CD4-positive, alpha-beta memory T cell (primary cell): ENCODE measurements at regions of chr6 and their contacts with region 1.

Region 1: DNA sequence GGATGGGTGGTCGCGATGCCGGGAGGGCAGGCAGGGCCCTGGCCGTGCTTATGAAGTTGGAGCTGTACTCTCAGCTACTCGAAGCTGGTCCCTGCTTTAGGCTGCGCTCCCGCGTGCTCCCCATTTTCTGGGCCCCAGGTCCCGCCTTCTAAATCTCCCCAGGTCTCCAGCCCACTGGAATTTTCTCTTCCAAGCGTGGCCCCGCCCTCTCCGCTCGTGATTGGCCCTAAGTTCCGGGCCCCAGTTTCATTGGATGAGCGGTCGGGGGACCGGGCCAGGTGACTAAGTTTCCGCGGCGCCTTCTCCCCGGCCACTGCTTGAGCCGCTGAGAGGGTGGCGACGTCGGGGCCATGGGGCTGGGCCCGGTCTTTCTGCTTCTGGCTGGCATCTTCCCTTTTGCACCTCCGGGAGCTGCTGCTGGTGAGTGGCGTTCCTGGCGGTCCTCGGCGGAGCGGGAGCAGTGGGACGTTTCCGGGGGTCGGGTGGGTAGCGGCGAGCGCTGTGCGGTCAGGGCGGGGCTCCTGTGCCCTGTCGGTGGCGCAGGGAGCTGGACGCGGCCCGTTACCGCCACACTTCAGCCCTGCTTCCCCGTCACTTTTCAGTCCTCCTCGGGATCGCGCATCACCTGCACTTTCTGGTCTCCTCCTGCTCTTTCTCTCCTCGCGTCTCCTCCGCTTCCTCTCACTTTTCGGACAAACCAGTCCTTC is at the start of gene MICA:
- DNase-seq: peak; percentile 50 to 79 (median 54)
- H3K4me3 ChIP-seq: peak within 1 kb of the TSS; percentile 36 to 69
- H3K4me3 Mint-ChIP-seq: peak within 1 kb of the TSS; percentile 86 to 98 (median 97)
- H3K27ac ChIP-seq: peak within 1 kb of the TSS; percentile 76
- H3K27ac Mint-ChIP-seq: peak within 1 kb of the TSS; percentile 75 to 97 (median 91)
- H3K4me1 ChIP-seq: peaks cover 78% of the 10 kb centered on the region
- H3K4me1 Mint-ChIP-seq: peaks cover 55 to 93% (median 70%) of the 10 kb centered on the region in 4 donors
- H3K27me3 ChIP-seq: no peaks in the 10 kb centered on the region
- H3K27me3 Mint-ChIP-seq: no peaks in the 10 kb centered on the region
- total RNA-seq, gene MICA: 18.5 to 21.2 TPM

Region 2: DNA sequence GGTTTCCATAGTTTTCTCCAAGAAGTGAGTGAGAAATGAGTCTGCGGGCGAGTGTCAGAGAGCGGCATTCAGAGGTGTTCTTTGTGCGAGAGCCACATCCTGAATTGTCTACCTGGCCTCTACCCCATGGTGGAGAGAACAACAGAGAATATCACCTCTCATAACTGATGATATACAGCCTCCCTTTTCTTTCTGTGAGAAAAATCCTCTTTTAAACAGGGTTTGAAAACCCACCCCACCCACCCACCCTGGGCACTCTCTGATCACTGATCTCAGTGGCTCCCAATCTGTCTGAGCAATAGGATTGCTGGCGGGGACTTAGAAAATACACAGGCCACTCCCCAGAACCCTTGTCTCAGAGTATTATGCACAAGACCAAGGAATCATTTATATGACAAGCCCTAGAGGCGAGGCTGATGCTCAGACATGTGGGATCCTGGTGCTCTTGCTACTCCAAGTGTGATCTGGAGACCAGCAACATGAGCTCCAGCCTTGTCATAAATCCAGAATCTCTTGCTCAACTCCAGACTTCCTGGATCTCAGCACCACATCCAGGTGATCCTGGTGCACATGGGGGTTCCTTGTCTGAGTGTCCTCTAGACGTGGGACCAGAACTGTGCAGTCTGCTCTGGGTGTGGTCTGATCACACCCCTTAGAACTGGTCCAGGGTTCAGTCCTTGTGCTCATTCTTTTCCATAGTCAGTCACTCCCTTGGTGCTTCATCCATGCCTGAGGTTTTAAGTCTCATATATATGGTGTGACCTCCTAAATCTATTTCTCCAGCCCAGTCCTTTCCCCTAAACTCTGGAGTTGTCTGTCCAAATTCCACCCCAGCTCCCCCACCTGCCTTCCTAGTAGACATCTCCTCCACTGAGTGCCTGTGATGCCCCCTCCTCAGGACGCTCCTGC is 51.8 kb before region 1 on chr6:
- CTCF ChIA-PET with region 1: no interaction called
- POLR2A ChIA-PET with region 1: interaction called, 18 read pairs
- intact Hi-C with region 1: no loop called
- DNase-seq: peak; percentile 48 to 71 (median 56)
- H3K4me3 ChIP-seq: no peak overlapping the region
- H3K4me3 Mint-ChIP-seq: peak overlapping the region; percentile 62 to 99 (median 98)
- H3K27ac ChIP-seq: peak overlapping the region; percentile 4
- H3K27ac Mint-ChIP-seq: peak overlapping the region; percentile 85 to 100 (median 88)
- H3K4me1 ChIP-seq: peaks cover 54% of the 10 kb centered on the region
- H3K4me1 Mint-ChIP-seq: peaks cover 51 to 74% (median 63%) of the 10 kb centered on the region in 4 donors
- H3K27me3 ChIP-seq: no peaks in the 10 kb centered on the region
- H3K27me3 Mint-ChIP-seq: no peaks in the 10 kb centered on the region

Region 3: DNA sequence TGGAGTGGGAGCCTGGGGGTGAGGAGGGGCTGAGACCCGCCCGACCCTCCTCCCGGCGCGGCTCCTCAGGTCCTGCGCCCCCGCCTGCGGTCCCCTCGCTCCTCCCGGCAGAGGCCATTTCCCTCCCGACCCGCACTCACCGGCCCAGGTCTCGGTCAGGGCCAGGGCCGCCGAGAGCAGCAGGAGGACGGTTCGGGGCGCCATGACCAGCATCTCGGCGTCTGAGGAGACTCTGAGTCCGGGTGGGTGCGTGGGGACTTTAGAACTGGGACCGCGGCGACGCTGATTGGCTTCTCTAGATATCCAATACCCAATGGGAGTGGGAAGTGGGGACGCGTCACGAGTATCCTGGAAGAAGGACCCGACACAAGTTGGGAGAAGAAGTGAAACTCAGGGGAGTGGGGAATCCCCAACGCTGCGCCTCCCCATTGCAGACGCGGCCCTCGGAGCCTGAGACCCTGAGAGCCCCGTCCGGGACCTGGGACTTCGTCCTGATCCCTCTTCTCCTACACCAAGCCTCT is 46.4 kb before region 1 on chr6 and contains the start of gene HLA-B:
- CTCF ChIA-PET with region 1: no interaction called
- POLR2A ChIA-PET with region 1: interaction called, 18 read pairs
- intact Hi-C with region 1: loop called (anchors 1 kb)
- DNase-seq: peak; percentile 82 to 93 (median 85)
- H3K4me3 ChIP-seq: peak within 1 kb of the TSS; percentile 68 to 86
- H3K4me3 Mint-ChIP-seq: peak within 1 kb of the TSS; percentile 97 to 99 (median 99)
- H3K27ac ChIP-seq: peak within 1 kb of the TSS; percentile 99
- H3K27ac Mint-ChIP-seq: peak within 1 kb of the TSS; percentile 100
- H3K4me1 ChIP-seq: peaks cover 59% of the 10 kb centered on the region
- H3K4me1 Mint-ChIP-seq: peaks cover 44 to 82% (median 55%) of the 10 kb centered on the region in 4 donors
- H3K27me3 ChIP-seq: no peaks in the 10 kb centered on the region
- H3K27me3 Mint-ChIP-seq: peaks cover 1% of the 10 kb centered on the region in 2 donors
- total RNA-seq, gene HLA-B: 5,565 to 5,762 TPM

Region 4: DNA sequence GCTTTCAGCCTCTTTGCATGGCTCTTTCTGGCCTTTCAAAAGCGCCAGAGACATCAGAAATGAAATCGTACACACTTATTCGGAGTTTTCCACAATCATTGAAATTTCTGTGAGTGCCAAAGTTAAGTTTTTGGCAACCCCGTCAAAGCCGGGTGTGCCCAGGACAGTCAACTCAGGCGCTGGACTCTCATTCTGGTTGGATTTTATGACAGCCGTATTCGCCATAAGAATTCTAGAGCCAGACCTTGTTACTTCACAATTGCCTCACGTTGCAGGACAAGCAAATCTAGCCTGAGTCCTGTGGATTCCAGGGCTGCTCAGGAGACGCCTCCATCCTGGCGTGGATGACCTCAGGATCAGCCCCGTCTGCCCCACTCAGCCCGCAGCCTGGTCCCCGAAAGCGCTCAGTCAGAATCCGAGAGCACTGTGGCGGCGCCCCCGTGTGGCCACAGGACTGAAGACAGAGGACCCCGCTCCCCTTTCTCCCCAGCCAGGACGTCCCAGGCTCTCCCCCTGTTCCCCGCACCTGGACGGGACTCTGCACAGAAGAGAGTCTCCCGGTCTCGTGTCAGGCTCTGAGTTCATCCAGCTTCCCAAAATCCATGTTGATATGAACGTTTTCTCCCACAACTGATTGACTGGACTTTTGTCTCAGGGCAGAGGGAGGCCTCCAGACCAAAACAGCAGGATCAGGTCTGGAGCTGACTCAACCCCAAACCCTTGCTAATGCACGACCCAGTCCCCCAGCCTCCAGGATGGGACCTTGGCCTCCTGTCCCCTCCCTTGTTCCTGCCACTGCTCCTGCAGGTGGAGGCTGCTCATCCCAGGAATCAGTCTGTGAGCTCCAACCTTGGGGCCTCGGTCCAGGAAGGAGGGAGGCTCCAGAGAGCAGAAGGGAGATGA is 38.2 kb after region 1 on chr6:
- CTCF ChIA-PET with region 1: interaction called, 131 read pairs
- POLR2A ChIA-PET with region 1: interaction called, 16 read pairs
- intact Hi-C with region 1: no loop called
- DNase-seq: peak; percentile 68 to 78 (median 75)
- H3K4me3 ChIP-seq: no peak overlapping the region
- H3K4me3 Mint-ChIP-seq: peak overlapping the region in 1 of 8 donors; percentile 33
- H3K27ac ChIP-seq: no peak overlapping the region
- H3K27ac Mint-ChIP-seq: peak overlapping the region in 2 of 7 donors; percentile 42 to 48
- H3K4me1 ChIP-seq: peaks cover 7% of the 10 kb centered on the region
- H3K4me1 Mint-ChIP-seq: peaks cover 0 to 8% (median under 1%) of the 10 kb centered on the region in 4 donors
- H3K27me3 ChIP-seq: peaks cover under 1% of the 10 kb centered on the region
- H3K27me3 Mint-ChIP-seq: peaks cover 25 to 27% of the 10 kb centered on the region in 2 donors

Region 5: GRCh38 chr6:31462964-31463870 is 59.8 kb after region 1 on chr6:
- CTCF ChIA-PET with region 1: interaction called, 3 read pairs
- POLR2A ChIA-PET with region 1: interaction called, 33 read pairs
- intact Hi-C with region 1: no loop called
- DNase-seq: peak; percentile 91 to 96 (median 94)
- H3K4me3 ChIP-seq: peak overlapping the region; percentile 82 to 85
- H3K4me3 Mint-ChIP-seq: peak overlapping the region; percentile 97 to 100 (median 100)
- H3K27ac ChIP-seq: peak overlapping the region; percentile 99
- H3K27ac Mint-ChIP-seq: peak overlapping the region; percentile 99 to 100 (median 100)
- H3K4me1 ChIP-seq: peaks cover 55% of the 10 kb centered on the region
- H3K4me1 Mint-ChIP-seq: peaks cover 47 to 73% (median 60%) of the 10 kb centered on the region in 4 donors
- H3K27me3 ChIP-seq: no peaks in the 10 kb centered on the region
- H3K27me3 Mint-ChIP-seq: no peaks in the 10 kb centered on the region

Region 6: GRCh38 chr6:31597006-31597405 is 193.6 kb after region 1 on chr6:
- CTCF ChIA-PET with region 1: interaction called, 3 read pairs
- POLR2A ChIA-PET with region 1: interaction called, 4 read pairs
- intact Hi-C with region 1: loop called (anchors 5 kb)
- DNase-seq: peak; percentile 66 to 79 (median 75)
- H3K4me3 ChIP-seq: no peak overlapping the region
- H3K4me3 Mint-ChIP-seq: peak overlapping the region in 5 of 8 donors; percentile 33 to 66 (median 43)
- H3K27ac ChIP-seq: no peak overlapping the region
- H3K27ac Mint-ChIP-seq: peak overlapping the region; percentile 60 to 89 (median 77)
- H3K4me1 ChIP-seq: peaks cover 60% of the 10 kb centered on the region
- H3K4me1 Mint-ChIP-seq: peaks cover 27 to 56% (median 45%) of the 10 kb centered on the region in 4 donors
- H3K27me3 ChIP-seq: no peaks in the 10 kb centered on the region
- H3K27me3 Mint-ChIP-seq: no peaks in the 10 kb centered on the region

Region 7: DNA sequence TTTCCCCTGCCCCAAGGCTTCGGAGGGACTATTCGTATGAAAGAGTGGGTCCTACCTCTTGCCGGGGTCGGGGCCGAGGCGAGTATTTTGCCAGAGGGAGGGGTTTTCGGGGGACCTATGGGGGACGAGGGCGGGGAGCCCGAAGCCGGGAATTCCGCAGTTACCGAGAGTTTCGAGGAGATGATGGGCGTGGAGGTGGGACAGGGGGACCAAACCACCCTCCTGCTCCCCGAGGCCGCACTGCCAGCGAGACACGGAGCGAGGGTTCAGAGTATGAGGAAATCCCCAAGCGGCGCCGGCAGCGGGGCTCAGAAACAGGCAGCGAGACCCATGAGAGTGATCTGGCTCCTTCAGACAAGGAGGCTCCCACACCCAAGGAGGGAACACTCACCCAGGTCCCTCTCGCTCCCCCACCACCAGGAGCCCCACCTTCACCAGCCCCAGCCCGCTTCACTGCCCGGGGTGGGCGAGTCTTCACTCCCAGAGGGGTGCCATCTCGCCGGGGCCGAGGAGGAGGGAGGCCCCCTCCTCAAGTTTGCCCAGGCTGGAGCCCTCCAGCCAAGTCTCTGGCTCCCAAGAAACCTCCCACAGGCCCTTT is 228.3 kb after region 1 on chr6:
- CTCF ChIA-PET with region 1: no interaction called
- POLR2A ChIA-PET with region 1: no interaction called
- intact Hi-C with region 1: no loop called
- DNase-seq: no peak
- H3K4me3 ChIP-seq: no peak overlapping the region
- H3K4me3 Mint-ChIP-seq: no peak overlapping the region
- H3K27ac ChIP-seq: no peak overlapping the region
- H3K27ac Mint-ChIP-seq: no peak overlapping the region
- H3K4me1 ChIP-seq: no peaks in the 10 kb centered on the region
- H3K4me1 Mint-ChIP-seq: peaks cover 0 to 5% (median 3%) of the 10 kb centered on the region in 4 donors
- H3K27me3 ChIP-seq: no peaks in the 10 kb centered on the region
- H3K27me3 Mint-ChIP-seq: no peaks in the 10 kb centered on the region